ENCODE measurements at regions of chr19 and their contacts with region 1.

Region 1: DNA sequence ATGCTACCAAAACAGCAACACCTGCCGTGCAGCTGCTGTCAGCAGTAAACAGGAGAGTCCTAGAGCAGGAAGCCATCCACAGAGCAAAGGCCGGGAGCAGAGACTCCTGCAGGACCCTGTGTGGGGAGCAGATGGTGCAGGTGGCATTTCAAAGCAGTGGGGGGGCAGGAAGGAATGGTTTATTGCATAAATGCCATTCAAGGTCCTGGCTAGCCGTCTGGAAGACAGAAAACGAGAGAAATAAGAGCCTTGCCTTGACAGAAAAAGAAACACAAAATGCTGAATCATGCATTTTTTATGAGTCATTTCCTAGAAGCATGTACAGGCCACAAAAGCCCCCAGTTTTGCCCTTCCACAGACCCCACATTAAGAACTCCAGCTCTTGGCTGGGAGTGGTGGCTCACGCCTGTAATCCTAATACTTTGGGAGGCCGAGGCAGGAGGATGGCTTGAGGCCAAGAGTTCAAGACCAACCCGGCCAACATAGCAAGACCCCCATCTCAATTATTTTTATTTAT is 5.4 kb downstream of the RSPH6A start:
- DNase-seq: no peak
- CTCF ChIP-seq: no peak

Region 2: DNA sequence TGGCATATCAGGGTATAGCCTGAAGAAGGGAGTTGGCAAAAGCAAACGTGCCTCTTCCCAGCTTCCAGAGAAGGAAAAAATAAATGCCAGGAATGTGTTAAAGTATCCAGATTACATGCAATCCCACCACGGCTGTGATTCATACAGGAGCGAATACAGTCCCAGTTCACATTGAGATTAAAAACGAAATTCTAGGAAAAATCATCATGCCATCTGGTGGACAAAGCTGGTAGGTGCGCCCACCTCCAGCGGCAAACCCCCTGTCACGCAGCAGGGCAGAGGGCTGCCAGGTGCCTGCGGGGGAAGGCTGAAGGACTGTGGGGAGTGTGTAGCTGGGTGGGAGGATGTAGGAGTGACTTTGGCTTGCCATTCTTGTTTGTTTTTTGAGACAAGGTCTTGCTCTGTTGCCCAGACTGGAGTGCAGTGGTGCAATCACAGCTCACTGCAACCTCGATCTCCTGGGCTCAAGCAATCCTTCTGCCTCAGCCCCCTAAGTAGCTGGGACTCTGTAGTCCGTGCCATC is 10.6 kb before region 1 on chr19:
- CTCF ChIA-PET with region 1: interaction called, 113 read pairs
- POLR2A ChIA-PET with region 1: interaction called, 3 read pairs
- DNase-seq: peak; percentile 81
- CTCF ChIP-seq: peak; percentile 72